Calu3 (cell line): ENCODE measurements at regions of chr5 and their contacts with region 1.

Region 1: DNA sequence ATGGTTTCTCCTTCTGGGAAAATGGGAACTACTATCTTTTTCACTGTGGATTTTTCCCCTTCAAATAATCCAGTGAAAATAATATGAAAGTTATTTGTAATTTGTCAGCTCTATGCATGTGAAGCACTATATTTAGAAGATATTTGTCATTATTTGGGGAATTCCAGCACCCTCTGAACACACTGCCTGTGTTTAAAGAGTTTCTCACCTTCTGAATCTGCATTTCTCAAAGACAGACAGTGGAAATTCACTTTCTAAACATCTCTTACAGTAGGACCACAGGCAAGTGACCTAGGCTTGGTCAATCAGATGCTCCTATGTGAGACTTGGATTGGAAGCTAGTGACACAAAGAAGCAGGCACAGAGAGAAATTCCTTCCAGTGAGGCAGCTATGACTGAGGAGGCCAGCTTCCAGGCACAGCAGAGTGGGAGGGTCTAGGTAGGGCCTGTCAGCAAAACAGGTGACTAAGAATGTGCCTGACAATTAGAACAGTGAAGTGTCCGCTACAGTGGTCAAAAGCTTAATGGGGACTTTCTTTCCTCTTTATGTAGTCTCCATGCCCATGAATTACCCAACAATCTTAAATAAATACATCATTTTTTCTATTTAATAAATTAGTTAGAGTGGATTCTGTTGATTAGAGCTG is 167.2 kb downstream of the HMHB1 start:
- DNase-seq: peak; percentile 12
- H3K4me3 Mint-ChIP-seq: no peak overlapping the region
- H3K27ac Mint-ChIP-seq: no peak overlapping the region
- H3K4me1 Mint-ChIP-seq: peaks cover 27% of the 10 kb centered on the region
- H3K27me3 Mint-ChIP-seq: no peaks in the 10 kb centered on the region
- CTCF ChIP-seq: no peak

Region 2: GRCh38 chr5:143865426-143866025 is 113.6 kb before region 1 on chr5:
- CTCF ChIA-PET with region 1: no interaction called
- intact Hi-C with region 1: no loop called
- DNase-seq: no peak
- H3K4me3 Mint-ChIP-seq: no peak overlapping the region
- H3K27ac Mint-ChIP-seq: no peak overlapping the region
- H3K4me1 Mint-ChIP-seq: peaks cover 14% of the 10 kb centered on the region
- H3K27me3 Mint-ChIP-seq: no peaks in the 10 kb centered on the region
- CTCF ChIP-seq: no peak

Region 3: DNA sequence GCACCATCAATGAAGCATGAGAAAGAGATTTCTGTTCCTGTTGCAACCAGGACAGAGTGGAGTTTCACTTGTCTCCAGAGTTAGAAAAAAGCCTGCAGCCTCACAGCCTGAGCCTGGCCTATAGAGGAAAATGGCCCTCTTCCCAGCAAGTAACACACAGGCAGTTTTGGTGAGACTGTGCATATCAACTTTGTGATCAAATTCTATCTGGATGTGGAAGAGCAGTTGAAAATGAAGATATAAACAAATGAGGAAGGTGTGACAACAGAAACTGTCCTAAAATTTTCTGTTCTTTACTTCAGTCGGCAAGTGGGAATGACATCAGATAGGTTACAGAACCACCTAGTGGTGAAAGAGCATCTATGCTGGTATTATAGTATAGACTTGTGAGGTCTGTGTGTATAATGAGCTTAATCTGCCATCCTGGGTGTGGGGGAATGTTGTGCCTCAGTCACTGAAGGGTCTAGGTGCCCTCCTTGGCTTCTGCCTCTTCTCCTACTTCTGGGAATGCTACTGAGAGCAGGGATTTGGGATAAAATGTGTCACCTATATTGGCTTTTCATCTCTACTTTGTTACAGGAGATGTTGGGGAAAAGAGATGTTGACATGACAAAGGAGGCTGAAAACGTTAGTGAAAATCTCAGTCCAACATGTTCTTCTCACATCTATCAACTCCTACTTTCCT is 163.1 kb after region 1 on chr5:
- CTCF ChIA-PET with region 1: interaction called, 5 read pairs
- intact Hi-C with region 1: loop called (anchors 5 kb)
- DNase-seq: no peak
- H3K4me3 Mint-ChIP-seq: no peak overlapping the region
- H3K27ac Mint-ChIP-seq: no peak overlapping the region
- H3K4me1 Mint-ChIP-seq: peaks cover 26% of the 10 kb centered on the region
- H3K27me3 Mint-ChIP-seq: peaks cover 14% of the 10 kb centered on the region
- CTCF ChIP-seq: no peak

Region 4: DNA sequence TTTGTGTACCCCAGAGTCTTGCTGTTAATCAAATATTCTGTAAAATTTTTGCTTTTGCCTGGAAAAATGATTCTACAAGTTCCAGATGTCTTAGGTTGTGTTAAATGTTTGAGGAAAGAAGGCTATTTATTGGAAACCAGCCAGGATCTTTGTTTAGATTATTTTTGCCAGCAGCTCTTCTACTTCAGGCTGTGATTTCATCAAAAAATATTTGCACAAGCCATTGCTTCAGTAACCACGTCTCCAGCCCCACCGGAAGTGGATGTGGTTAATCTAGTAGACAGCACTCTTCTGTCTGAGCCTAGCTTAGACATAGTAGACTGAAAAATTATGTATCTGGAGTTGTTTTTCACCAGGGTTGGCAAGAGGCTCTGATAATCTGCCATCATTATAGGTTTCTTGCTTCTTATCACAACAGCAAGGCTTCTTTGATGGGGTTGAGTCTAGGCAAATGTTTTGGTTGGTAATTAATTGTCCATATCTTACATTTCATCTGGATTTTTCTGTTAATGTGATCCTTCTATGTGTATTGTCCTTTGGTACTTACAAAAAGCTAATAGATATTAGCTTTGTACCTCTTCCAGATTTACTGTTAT is 208.6 kb after region 1 on chr5:
- CTCF ChIA-PET with region 1: no interaction called
- intact Hi-C with region 1: loop called (anchors 5 kb)
- DNase-seq: peak; percentile 63
- H3K4me3 Mint-ChIP-seq: no peak overlapping the region
- H3K27ac Mint-ChIP-seq: peak overlapping the region; percentile 29
- H3K4me1 Mint-ChIP-seq: peaks cover under 1% of the 10 kb centered on the region
- H3K27me3 Mint-ChIP-seq: no peaks in the 10 kb centered on the region
- CTCF ChIP-seq: no peak